H1 (cell line): ENCODE measurements at regions of chr10 and their contacts with region 1.

Region 1: DNA sequence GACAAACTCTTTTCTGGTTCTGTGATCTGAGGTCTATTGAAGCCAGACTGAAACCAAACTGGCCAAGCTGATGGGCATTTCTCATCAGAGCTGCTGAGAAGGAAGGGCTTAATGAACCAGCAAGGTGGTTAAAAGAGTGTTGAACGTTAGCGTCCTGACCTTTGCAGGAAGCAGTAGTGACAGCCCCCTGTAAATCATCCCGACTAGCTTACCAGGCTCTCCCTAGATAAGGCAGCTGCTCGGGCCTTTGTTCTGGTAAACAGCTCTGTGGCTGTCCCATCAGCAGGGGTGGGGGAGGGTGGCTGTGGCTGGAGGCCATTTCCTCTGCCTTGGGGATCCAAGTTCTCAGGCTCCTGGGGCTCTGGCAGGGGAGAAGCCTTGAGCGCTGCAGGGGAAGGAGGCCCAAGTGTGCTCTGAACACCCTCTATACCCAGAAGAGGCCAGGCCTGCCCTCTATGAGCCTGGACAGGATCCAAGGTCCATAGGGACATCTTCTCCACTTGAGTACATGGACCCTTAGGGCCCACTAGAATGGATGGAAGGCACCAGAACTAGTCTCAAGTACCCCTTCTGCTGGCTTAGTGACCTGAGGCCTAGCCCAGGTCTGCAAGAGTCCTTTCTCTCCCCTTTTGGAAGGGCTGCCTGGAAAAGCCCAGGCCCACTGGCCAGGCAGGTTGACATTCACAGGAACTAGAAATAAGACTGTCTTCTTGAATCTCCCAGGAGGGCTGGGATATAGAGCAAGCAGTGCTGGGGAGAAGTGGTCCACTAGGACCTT is 134.6 kb downstream of the ARHGAP22 start:
- DNase-seq: peak in 1 of 2 experiments; percentile 48
- H3K4me3 ChIP-seq: no peak overlapping the region
- H3K27ac ChIP-seq: no peak overlapping the region
- H3K4me1 ChIP-seq: peaks cover 3 to 22% (median 15%) of the 10 kb centered on the region in 4 experiments; a peak in 6 of 7 replicates
- H3K27me3 ChIP-seq: peaks cover 0 to 12% (median 8%) of the 10 kb centered on the region in 4 experiments; a peak in 4 of 7 replicates
- CTCF ChIP-seq: no peak
- EP300 ChIP-seq: no peak
- POLR2A ChIP-seq: no peak
- RAD21 ChIP-seq: no peak

Region 2: DNA sequence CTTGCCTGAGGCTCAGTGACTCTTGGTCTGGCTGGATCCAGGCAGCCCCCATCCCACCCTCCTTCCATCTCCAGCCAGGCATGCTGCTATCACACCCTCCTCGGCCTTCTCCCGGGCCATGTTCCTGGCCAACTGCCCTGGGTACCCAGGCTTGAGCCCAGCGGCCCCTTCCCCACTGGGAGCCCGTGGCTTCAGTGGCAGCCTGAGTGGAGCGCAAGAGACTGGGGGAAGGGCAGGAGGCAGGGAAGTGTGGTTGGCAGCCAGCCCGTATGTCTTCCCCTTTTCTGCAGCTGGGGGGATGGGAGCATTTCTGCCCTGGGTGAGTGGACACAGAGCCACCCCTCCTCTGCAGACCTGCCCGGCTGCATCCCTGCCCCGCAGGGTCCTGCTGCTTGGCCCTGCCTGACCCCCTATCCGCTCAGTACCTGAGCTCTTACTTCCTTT is 13.9 kb before region 1 on chr10:
- CTCF ChIA-PET with region 1: interaction called, 12 read pairs
- POLR2A ChIA-PET with region 1: interaction called, 3 read pairs
- DNase-seq: peak in 1 of 2 experiments; percentile 46
- H3K4me3 ChIP-seq: no peak overlapping the region
- H3K27ac ChIP-seq: no peak overlapping the region
- H3K4me1 ChIP-seq: peaks cover 0 to 5% (median 2%) of the 10 kb centered on the region in 4 experiments; a peak in 4 of 7 replicates
- H3K27me3 ChIP-seq: no peaks in the 10 kb centered on the region
- CTCF ChIP-seq: no peak
- EP300 ChIP-seq: no peak
- POLR2A ChIP-seq: no peak
- RAD21 ChIP-seq: no peak